ENCODE measurements at regions of chr5 and their contacts with region 1.

Region 1: DNA sequence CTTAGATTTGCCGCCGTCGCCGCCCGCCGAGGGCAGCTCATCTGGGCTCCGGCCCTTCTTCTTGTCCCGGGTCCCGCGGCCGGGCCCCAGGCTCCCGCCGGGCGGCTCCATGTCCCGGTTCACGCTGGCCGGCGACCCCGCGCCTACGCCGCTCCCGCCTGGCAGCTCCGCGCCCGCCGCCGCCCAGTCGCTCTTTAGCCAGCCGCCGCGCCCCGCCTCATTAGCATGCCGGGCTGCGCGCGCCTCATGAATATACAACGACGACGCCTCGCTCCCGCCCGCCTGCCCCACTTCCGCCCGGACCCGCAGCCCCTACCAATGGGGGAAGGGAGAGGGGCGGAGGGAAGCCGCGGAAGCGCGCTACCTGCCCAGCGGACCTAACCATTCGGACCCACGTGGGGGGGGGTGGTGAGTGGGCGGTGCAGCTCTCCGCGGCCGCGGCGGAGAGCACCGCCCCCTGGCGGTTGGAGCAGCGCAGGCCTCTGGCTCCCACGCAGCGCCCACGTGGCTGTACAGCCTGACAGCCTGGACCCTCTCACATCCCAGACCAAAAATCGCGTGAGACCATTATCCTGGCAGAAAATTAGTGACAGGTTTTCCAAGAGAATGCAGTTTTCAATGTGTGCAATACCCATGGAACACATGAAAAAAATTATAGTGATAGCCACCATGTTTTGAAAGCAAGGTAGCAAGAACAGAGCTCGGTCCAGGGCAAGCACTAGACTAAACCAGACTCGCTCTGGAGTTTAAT is at the start of gene DIAPH1:
- DNase-seq: peak; percentile 98
- H3K4me3 Mint-ChIP-seq: peak within 1 kb of the TSS; percentile 100
- H3K27ac Mint-ChIP-seq: peak within 1 kb of the TSS; percentile 92
- H3K4me1 Mint-ChIP-seq: peaks cover 53% of the 10 kb centered on the region
- H3K27me3 Mint-ChIP-seq: no peaks in the 10 kb centered on the region
- total RNA-seq, gene DIAPH1: 317 to 323 TPM

Region 2: GRCh38 chr5:141524604-141525597 is 94.1 kb before region 1 on chr5:
- CTCF ChIA-PET with region 1: no interaction called
- POLR2A ChIA-PET with region 1: no interaction called
- DNase-seq: peak; percentile 51
- H3K4me3 Mint-ChIP-seq: no peak overlapping the region
- H3K27ac Mint-ChIP-seq: no peak overlapping the region
- H3K4me1 Mint-ChIP-seq: peaks cover 25% of the 10 kb centered on the region
- H3K27me3 Mint-ChIP-seq: no peaks in the 10 kb centered on the region

Region 3: GRCh38 chr5:141590127-141590526 is 28.9 kb before region 1 on chr5:
- CTCF ChIA-PET with region 1: interaction called, 436 read pairs
- POLR2A ChIA-PET with region 1: interaction called, 124 read pairs
- DNase-seq: no peak
- H3K4me3 Mint-ChIP-seq: no peak overlapping the region
- H3K27ac Mint-ChIP-seq: no peak overlapping the region
- H3K4me1 Mint-ChIP-seq: peaks cover 39% of the 10 kb centered on the region
- H3K27me3 Mint-ChIP-seq: no peaks in the 10 kb centered on the region

Region 4: GRCh38 chr5:141605523-141606277 is 13.3 kb before region 1 on chr5:
- CTCF ChIA-PET with region 1: interaction called, 198 read pairs
- POLR2A ChIA-PET with region 1: interaction called, 123 read pairs
- DNase-seq: peak; percentile 84
- H3K4me3 Mint-ChIP-seq: peak overlapping the region; percentile 63
- H3K27ac Mint-ChIP-seq: peak overlapping the region; percentile 94
- H3K4me1 Mint-ChIP-seq: peaks cover 78% of the 10 kb centered on the region
- H3K27me3 Mint-ChIP-seq: no peaks in the 10 kb centered on the region

Region 5: DNA sequence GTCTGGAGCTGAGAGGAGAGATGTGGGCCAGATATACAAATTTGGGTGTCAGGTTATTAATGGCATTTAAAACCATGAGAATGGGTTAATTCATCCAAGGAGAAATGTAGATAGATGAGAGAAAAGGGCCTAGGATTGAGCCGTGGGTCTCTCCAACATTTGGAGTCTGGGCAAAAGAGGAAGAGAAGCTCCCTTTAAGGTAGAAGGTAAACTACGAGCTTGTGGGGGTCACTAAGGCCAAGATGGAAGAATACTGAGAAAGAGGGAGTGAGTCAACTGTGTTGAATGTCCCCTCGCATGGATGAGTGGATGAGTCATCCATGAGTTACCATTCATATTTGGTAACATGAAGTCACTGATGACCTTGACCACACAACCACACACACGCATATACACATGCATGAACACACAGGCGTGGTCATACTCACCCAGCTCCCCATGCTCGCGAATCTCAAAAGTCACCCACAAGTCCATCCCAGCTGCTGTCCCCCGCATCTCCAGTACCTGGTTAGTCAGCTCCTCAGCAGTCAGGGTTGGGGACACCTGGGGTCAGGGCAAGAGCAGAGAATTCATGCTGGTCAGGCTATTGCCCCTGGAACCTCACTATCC is 39.1 kb after region 1 on chr5:
- CTCF ChIA-PET with region 1: no interaction called
- POLR2A ChIA-PET with region 1: no interaction called
- DNase-seq: peak; percentile 27
- H3K4me3 Mint-ChIP-seq: no peak overlapping the region
- H3K27ac Mint-ChIP-seq: no peak overlapping the region
- H3K4me1 Mint-ChIP-seq: peaks cover 3% of the 10 kb centered on the region
- H3K27me3 Mint-ChIP-seq: peaks cover 3% of the 10 kb centered on the region

Measured in activated CD4-positive, alpha-beta memory T cell treated with anti-CD3 and anti-CD28 coated beads, Interleukin-2, amount 10 ng/mL, durations not matched to agents 7 days and 5 days (primary cell).